Posterior vena cava (tissue), 2 donors: ENCODE measurements at regions of chr14 and their contacts with region 1.

Region 1: DNA sequence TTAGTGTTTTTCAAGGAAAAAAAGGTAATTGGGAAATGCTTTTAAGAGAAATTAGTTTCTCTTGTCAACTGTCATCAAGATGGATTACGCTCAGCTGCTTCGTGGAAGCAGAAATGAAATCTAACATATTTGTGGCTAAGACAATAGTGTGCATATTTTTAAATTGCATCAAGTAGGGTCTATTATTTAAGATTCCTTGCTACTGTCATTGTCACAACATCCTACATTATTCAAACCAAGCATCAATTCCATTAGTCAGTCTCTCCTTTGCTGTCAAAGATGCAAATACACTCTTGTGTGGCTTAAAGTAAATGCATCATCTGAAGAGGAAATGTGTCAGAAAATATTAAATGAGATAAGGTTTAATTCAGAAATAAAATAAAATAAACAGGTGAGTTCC is 1277.6 kb upstream of the SEL1L start:
- DNase-seq: no peak

Region 2: GRCh38 chr14:82837611-82838140 is 26.4 kb after region 1 on chr14:
- intact Hi-C with region 1: no loop called
- DNase-seq: no peak

Region 3: GRCh38 chr14:83007641-83008225 is 196.5 kb after region 1 on chr14:
- intact Hi-C with region 1: no loop called
- DNase-seq: no peak

Region 4: DNA sequence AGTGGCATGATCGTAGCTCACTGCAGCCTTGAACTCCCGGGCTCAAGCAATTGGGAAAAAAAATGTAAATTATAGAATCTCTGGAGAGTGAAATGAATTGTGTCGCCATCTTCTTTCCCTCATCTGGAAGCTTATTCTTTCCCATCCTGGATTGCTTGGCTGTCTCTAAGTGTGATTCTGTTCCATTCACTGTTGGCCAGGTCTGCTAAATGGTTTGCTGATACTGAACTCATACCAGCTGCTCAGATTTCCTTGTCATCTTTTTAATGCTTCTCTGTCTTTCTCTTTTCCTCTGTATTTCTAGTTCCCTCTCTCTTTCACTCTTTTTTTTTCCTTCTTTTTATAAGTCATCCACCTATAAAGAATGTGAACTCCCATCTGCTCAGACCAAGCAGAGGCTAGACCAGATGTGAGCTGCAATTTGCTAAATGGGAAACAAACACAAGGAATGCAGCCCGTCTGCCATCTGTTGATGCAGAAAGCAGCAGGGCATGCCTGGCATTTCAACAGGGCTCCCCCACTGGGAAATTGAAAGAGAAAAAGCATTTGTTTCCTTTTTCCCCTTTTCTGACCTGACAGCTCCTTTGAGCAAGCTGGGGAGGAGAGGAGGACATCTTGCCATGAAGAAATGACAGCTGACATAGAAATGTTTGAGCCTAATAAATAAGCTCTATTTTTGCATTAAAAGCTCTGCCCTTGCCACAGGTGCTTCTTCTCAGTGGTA is 895.1 kb after region 1 on chr14:
- intact Hi-C with region 1: no loop called
- DNase-seq: no peak

Region 5: GRCh38 chr14:84131924-84132323 is 1320.7 kb after region 1 on chr14:
- intact Hi-C with region 1: loop called in 1 of 2 experiments (anchors 5 kb)
- DNase-seq: no peak